Activated CD4-positive, alpha-beta T cell treated with anti-CD3 and anti-CD28 coated beads for 36 hours (primary cell): ENCODE measurements at regions of chr5 and their contacts with region 1.

Region 1: DNA sequence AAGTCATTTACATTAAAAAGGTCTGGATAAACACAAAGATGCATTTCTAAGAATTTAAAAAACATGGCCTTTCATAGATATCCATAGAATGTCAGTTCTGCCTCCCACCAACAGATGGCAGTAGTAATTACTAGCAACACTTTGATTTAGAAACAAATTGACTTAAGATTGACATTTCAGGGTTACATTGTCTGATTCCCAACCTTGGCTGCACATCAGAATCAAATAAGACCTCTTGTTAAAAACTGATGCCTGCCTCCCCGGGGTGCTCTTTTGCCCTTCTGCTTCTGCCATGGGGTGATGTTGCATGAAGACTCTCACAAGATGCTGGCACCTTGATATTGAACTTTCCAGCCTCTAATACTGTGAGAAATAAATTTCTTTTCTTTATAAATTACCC is 146.2 kb upstream of the GPR151 start:
- DNase-seq: peak; percentile 28
- ATAC-seq: no peak
- H3K4me3 Mint-ChIP-seq: no peak overlapping the region
- H3K27ac Mint-ChIP-seq: no peak overlapping the region
- H3K4me1 Mint-ChIP-seq: peaks cover 10% of the 10 kb centered on the region
- H3K27me3 Mint-ChIP-seq: no peaks in the 10 kb centered on the region

Region 2: GRCh38 chr5:146533260-146533857 is 128.9 kb before region 1 on chr5:
- CTCF ChIA-PET with region 1: interaction called, 3 read pairs
- POLR2A ChIA-PET with region 1: no interaction called
- intact Hi-C with region 1: loop called in 1 of 2 experiments (anchors 10 kb)
- DNase-seq: peak; percentile 88
- ATAC-seq: peak; percentile 98
- H3K4me3 Mint-ChIP-seq: no peak overlapping the region
- H3K27ac Mint-ChIP-seq: no peak overlapping the region
- H3K4me1 Mint-ChIP-seq: peaks cover 3% of the 10 kb centered on the region
- H3K27me3 Mint-ChIP-seq: no peaks in the 10 kb centered on the region

Region 3: GRCh38 chr5:146541958-146542849 is 120.0 kb before region 1 on chr5:
- CTCF ChIA-PET with region 1: interaction called, 3 read pairs
- POLR2A ChIA-PET with region 1: no interaction called
- intact Hi-C with region 1: loop called (anchors 5 to 10 kb)
- DNase-seq: peak; percentile 85
- ATAC-seq: peak; percentile 93
- H3K4me3 Mint-ChIP-seq: no peak overlapping the region
- H3K27ac Mint-ChIP-seq: no peak overlapping the region
- H3K4me1 Mint-ChIP-seq: no peaks in the 10 kb centered on the region
- H3K27me3 Mint-ChIP-seq: no peaks in the 10 kb centered on the region

Region 4: DNA sequence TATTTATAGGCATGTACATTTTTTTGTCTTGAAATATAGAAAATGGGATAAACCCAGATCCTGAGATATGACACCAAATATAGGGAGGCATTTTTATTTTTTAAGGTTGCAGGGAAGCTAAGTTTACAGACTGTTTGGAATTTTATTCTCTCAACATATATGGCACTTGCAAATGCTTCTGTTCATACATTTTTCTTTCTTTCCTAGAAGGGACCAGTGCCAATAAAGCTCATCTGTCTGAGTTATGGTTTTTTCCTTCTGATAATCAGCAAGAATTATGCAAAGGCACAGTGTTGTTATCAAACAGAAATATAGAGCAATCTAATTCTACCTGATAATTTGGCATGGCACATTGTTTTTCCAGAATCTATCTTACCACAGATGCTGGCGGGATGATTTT is 10.6 kb after region 1 on chr5:
- CTCF ChIA-PET with region 1: interaction called, 10 read pairs
- POLR2A ChIA-PET with region 1: no interaction called
- intact Hi-C with region 1: no loop called
- DNase-seq: no peak
- ATAC-seq: no peak
- H3K4me3 Mint-ChIP-seq: no peak overlapping the region
- H3K27ac Mint-ChIP-seq: no peak overlapping the region
- H3K4me1 Mint-ChIP-seq: no peaks in the 10 kb centered on the region
- H3K27me3 Mint-ChIP-seq: peaks cover 2% of the 10 kb centered on the region

Region 5: DNA sequence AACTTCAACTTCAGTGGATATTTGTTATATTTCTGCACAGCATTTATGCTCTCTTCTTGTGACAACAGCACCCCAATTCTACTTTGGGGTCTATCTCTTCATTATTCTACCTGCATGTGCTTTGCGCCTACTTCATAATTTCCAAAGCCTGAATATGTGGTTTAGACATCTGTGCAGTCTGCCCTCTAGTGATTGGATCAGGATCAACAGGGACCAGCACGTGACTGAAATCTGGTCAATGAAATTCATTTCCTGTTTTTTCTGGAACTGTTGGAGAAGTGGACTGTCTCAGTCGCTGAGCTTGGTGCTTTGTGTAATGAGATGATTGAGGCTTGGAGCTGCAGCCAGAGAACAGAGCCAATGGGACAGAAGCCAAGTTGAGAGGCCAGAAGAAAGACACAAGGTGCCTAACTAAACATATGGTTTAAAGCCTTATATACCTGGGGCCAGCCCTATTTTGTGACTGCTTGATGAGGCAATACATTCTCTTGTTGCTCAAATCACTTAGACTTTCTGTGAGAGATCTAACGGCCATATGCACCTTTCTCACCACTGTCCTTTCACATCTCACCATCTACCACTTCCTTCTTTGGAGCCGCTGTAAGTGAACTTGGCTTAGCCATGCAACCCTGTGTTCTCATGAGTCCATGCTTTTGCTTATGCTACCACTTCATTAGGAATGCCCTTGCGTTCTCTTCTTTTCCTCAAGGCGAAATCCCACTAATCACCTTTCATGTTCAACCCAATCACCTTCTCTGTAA is 285.1 kb after region 1 on chr5:
- CTCF ChIA-PET with region 1: no interaction called
- POLR2A ChIA-PET with region 1: no interaction called
- intact Hi-C with region 1: loop called (anchors 5 kb)
- DNase-seq: peak; percentile 24
- ATAC-seq: peak; percentile 36
- H3K4me3 Mint-ChIP-seq: no peak overlapping the region
- H3K27ac Mint-ChIP-seq: no peak overlapping the region
- H3K4me1 Mint-ChIP-seq: peaks cover 3% of the 10 kb centered on the region
- H3K27me3 Mint-ChIP-seq: peaks cover 2% of the 10 kb centered on the region